ENCODE measurements at regions of chr2 and their contacts with region 1.

Region 1: DNA sequence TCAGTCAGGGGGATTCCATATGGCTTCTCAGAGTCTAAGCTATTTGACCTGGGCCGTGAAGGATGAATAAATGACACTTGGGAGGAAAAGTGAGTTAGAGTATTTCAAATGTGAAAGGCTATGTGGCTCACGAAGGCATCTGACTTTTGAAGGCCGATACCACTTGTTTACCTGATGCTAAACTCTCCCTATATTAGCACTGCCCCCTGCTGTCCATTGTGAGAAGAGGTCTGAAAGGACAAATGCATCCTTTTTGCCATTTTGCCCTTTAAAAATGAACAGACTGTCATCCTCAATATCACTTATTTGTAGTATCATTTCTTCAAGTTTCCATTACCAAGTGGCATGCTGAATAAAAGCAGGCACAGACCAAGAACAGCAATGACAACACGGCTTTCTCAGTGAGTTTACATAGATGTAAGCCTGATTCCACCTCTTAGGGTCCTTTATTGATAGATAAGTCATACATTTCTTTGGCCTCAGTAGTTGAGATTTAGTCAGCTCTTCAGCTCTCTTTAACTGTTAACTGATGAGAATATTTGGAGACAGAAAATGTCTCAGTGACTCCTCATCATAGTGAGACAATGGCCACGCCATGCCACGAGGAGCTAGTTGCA is 40.1 kb downstream of the DOCK10 start:
- DNase-seq: peak; percentile 70
- H3K4me3 ChIP-seq: no peak overlapping the region
- H3K27ac ChIP-seq: peak overlapping the region; percentile 25
- H3K4me1 ChIP-seq: peaks cover 4% of the 10 kb centered on the region
- H3K27me3 ChIP-seq: no peaks in the 10 kb centered on the region
- CTCF ChIP-seq: peak; percentile 72 to 80
- POLR2A ChIP-seq: no peak

Region 2: GRCh38 chr2:223433461-223433860 is 1568.7 kb before region 1 on chr2:
- CTCF ChIA-PET with region 1: no interaction called
- POLR2A ChIA-PET with region 1: no interaction called
- dilution Hi-C with region 1: no loop called
- intact Hi-C with region 1: no loop called
- DNase-seq: no peak
- H3K4me3 ChIP-seq: no peak overlapping the region
- H3K27ac ChIP-seq: no peak overlapping the region
- H3K4me1 ChIP-seq: no peaks in the 10 kb centered on the region
- H3K27me3 ChIP-seq: no peaks in the 10 kb centered on the region
- CTCF ChIP-seq: no peak
- POLR2A ChIP-seq: no peak

Region 3: GRCh38 chr2:224357098-224357901 is 644.8 kb before region 1 on chr2:
- CTCF ChIA-PET with region 1: no interaction called
- POLR2A ChIA-PET with region 1: no interaction called
- dilution Hi-C with region 1: no loop called
- intact Hi-C with region 1: loop called (anchors 2 kb)
- DNase-seq: peak; percentile 82
- H3K4me3 ChIP-seq: no peak overlapping the region
- H3K27ac ChIP-seq: no peak overlapping the region
- H3K4me1 ChIP-seq: no peaks in the 10 kb centered on the region
- H3K27me3 ChIP-seq: peaks cover 0 to 3% of the 10 kb centered on the region in 2 experiments
- CTCF ChIP-seq: peak; percentile 44 to 68
- POLR2A ChIP-seq: no peak

Region 4: DNA sequence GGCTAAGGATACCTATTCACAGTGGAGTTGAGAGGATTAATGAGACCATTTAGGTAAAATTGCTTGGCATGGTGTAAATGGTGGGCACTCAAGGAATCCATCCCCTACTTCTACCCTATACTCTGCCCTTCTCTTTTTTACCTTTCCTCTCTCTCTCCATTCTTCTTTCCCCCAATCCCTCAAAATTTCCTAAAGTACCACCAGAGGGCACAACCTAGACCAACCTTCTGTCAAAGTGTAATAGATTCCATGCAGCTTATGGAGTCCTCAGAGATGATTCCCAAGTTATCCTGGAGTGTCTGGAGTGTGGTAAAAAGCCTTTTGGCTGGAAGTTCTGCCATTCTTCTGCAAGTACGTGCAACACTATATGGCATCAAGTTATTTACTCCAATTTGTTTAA is 253.0 kb before region 1 on chr2:
- CTCF ChIA-PET with region 1: no interaction called
- POLR2A ChIA-PET with region 1: no interaction called
- dilution Hi-C with region 1: no loop called
- intact Hi-C with region 1: loop called (anchors 1 kb)
- DNase-seq: no peak
- H3K4me3 ChIP-seq: no peak overlapping the region
- H3K27ac ChIP-seq: no peak overlapping the region
- H3K4me1 ChIP-seq: no peaks in the 10 kb centered on the region
- H3K27me3 ChIP-seq: no peaks in the 10 kb centered on the region
- CTCF ChIP-seq: no peak
- POLR2A ChIP-seq: no peak

Region 5: GRCh38 chr2:224816816-224817215 is 185.3 kb before region 1 on chr2:
- CTCF ChIA-PET with region 1: interaction called, 10 read pairs
- POLR2A ChIA-PET with region 1: no interaction called
- dilution Hi-C with region 1: no loop called
- intact Hi-C with region 1: no loop called
- DNase-seq: peak; percentile 62
- H3K4me3 ChIP-seq: no peak overlapping the region
- H3K27ac ChIP-seq: peak overlapping the region; percentile 64
- H3K4me1 ChIP-seq: peaks cover 34% of the 10 kb centered on the region
- H3K27me3 ChIP-seq: no peaks in the 10 kb centered on the region
- CTCF ChIP-seq: no peak
- POLR2A ChIP-seq: no peak

Region 6: GRCh38 chr2:224882291-224883171 is 119.6 kb before region 1 on chr2:
- CTCF ChIA-PET with region 1: no interaction called
- POLR2A ChIA-PET with region 1: no interaction called
- dilution Hi-C with region 1: no loop called
- intact Hi-C with region 1: loop called (anchors 2 kb)
- DNase-seq: peak; percentile 82
- H3K4me3 ChIP-seq: no peak overlapping the region
- H3K27ac ChIP-seq: peak overlapping the region; percentile 81
- H3K4me1 ChIP-seq: peaks cover 28% of the 10 kb centered on the region
- H3K27me3 ChIP-seq: no peaks in the 10 kb centered on the region
- CTCF ChIP-seq: no peak
- POLR2A ChIP-seq: no peak

Region 7: GRCh38 chr2:224968051-224968450 is 34.1 kb before region 1 on chr2:
- CTCF ChIA-PET with region 1: no interaction called
- POLR2A ChIA-PET with region 1: no interaction called
- dilution Hi-C with region 1: no loop called
- intact Hi-C with region 1: no loop called
- DNase-seq: no peak
- H3K4me3 ChIP-seq: no peak overlapping the region
- H3K27ac ChIP-seq: no peak overlapping the region
- H3K4me1 ChIP-seq: no peaks in the 10 kb centered on the region
- H3K27me3 ChIP-seq: no peaks in the 10 kb centered on the region
- CTCF ChIP-seq: no peak
- POLR2A ChIP-seq: no peak

Region 8: GRCh38 chr2:225660262-225661131 is 658.4 kb after region 1 on chr2:
- CTCF ChIA-PET with region 1: no interaction called
- POLR2A ChIA-PET with region 1: no interaction called
- dilution Hi-C with region 1: no loop called
- intact Hi-C with region 1: loop called (anchors 2 kb)
- DNase-seq: peak; percentile 55
- H3K4me3 ChIP-seq: no peak overlapping the region
- H3K27ac ChIP-seq: no peak overlapping the region
- H3K4me1 ChIP-seq: no peaks in the 10 kb centered on the region
- H3K27me3 ChIP-seq: peaks cover 0 to 2% of the 10 kb centered on the region in 2 experiments
- CTCF ChIP-seq: peak; percentile 81 to 82
- POLR2A ChIP-seq: no peak

Measured in endothelial cell of umbilical vein (primary cell).